ENCODE measurements at regions of chr2 and their contacts with region 1.

Region 1: GRCh38 chr2:33033606-33034081 is 86.9 kb downstream of the LTBP1 start:
- DNase-seq: peak in 2 of 3 donors; percentile 49 to 54
- ATAC-seq: peak; percentile 62 to 78
- H3K4me3 ChIP-seq: no peak overlapping the region
- H3K27ac ChIP-seq: no peak overlapping the region
- H3K4me1 ChIP-seq: no peaks in the 10 kb centered on the region
- H3K27me3 ChIP-seq: no peaks in the 10 kb centered on the region

Region 2: DNA sequence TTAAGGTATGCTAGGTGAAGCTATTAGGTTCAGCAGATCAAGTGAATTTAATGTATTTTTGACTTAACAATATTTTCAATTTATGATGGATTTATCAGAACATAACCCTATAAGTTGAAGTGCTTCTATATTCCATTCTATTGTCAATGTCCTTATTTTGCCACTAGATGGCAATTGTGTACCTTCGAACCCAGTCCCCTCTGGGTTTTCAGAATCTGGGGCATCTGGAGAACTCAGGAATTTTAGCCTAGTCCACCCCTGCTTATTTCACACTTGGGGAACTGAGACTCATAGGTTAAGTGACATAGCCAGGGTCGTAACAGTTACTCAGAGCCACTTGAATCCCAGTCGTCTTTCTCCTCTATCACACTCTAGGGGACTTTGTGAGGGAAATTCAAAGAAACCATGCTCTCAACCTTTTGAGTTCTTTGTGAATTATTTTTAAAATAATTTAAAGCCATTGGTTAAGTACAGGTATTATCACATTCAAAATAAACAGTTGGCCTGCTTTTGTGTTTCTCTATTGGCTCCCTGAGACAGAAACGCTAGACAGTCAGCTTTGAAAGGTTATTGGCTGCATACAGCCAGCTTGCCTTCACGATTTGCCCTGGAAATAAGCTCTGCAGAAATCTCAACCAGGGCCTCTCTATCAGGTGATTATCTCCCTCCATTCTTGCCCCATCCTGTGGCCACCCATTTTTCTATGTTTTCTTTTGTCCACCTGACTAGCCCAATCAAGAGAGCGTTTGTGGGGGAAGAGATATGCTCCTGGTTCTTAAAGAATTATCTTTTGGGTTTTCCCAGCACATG is 260.8 kb before region 1 on chr2:
- intact Hi-C with region 1: loop called (anchors 2 to 10 kb)
- DNase-seq: no peak
- ATAC-seq: peak; percentile 81 to 86
- H3K4me3 ChIP-seq: no peak overlapping the region
- H3K27ac ChIP-seq: no peak overlapping the region
- H3K4me1 ChIP-seq: no peaks in the 10 kb centered on the region
- H3K27me3 ChIP-seq: no peaks in the 10 kb centered on the region

Region 3: GRCh38 chr2:33267756-33268155 is 234.1 kb after region 1 on chr2:
- intact Hi-C with region 1: loop called in 2 of 4 experiments (anchors 5 to 10 kb)
- DNase-seq: no peak
- ATAC-seq: no peak
- H3K4me3 ChIP-seq: no peak overlapping the region
- H3K27ac ChIP-seq: no peak overlapping the region
- H3K4me1 ChIP-seq: peaks cover 2% of the 10 kb centered on the region
- H3K27me3 ChIP-seq: no peaks in the 10 kb centered on the region

Region 4: DNA sequence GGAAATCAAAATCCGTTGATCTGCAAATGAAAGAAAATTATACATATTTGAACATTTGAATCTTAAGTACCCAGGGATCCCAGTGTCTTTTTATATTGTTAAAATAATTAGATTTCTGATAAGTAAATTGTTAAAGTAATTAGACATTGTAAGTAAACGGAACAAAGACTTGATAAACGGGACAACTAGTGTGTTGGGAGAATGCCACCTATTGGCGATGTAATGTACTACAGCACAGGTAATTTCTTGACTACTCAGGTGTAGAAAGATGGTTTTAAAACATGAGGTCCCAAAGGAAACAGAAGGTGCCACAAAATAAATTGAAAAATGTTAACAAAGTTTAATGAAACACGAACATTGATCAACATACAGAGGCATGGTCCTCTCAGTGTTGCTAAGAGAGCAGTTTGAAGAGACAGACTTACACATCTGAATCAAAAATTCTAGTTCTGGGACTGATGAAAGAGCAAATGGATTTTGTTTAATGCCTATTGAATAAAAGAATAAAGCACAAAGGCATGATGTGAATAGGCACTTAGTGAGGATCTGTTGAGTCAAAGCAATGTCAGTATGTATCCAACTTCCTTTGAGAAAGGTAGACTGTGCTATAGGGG is 339.4 kb after region 1 on chr2:
- intact Hi-C with region 1: loop called in 1 of 4 experiments (anchors 10 kb)
- DNase-seq: no peak
- ATAC-seq: no peak
- H3K4me3 ChIP-seq: no peak overlapping the region
- H3K27ac ChIP-seq: no peak overlapping the region
- H3K4me1 ChIP-seq: no peaks in the 10 kb centered on the region
- H3K27me3 ChIP-seq: no peaks in the 10 kb centered on the region

Measured in right cardiac atrium (tissue), 5 donors.